ENCODE measurements at regions of chr2 and their contacts with region 1.

Region 1: DNA sequence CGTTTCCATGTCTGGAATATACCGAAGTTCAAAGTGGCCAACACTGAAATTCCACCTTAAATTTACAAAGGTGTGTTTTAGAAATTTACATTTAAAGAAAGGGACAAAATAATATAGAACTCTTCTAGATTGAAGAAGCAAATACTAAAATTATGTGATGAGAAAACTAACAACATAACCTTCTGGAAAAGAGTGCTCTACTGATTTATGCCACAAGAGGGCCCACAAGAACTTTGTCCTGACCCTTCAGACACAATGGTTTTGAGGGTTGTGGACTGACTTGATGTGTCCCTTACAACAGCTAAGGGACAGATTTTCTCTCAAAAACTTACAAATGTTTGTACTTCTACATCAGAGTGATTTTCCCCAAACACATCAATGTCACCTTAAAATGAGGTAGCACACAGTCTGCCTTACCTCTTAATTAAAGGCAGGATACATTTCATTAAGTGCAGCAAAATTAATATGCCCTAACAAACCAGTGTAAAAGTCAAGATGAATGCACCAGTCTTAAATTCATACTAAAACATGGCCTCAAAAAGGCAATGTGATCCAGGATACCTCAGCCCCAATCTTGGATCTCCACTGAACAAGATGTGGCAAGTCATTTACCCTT is 36.2 kb downstream of the EIF2AK3 start:
- DNase-seq: peak; percentile 34 to 58 (median 43)
- H3K4me3 ChIP-seq: no peak overlapping the region
- H3K4me3 Mint-ChIP-seq: no peak overlapping the region
- H3K27ac ChIP-seq: no peak overlapping the region
- H3K27ac Mint-ChIP-seq: peak overlapping the region in 4 of 7 donors; percentile 12 to 78 (median 40)
- H3K4me1 ChIP-seq: no peaks in the 10 kb centered on the region
- H3K4me1 Mint-ChIP-seq: no peaks in the 10 kb centered on the region
- H3K27me3 ChIP-seq: no peaks in the 10 kb centered on the region
- H3K27me3 Mint-ChIP-seq: no peaks in the 10 kb centered on the region

Region 2: DNA sequence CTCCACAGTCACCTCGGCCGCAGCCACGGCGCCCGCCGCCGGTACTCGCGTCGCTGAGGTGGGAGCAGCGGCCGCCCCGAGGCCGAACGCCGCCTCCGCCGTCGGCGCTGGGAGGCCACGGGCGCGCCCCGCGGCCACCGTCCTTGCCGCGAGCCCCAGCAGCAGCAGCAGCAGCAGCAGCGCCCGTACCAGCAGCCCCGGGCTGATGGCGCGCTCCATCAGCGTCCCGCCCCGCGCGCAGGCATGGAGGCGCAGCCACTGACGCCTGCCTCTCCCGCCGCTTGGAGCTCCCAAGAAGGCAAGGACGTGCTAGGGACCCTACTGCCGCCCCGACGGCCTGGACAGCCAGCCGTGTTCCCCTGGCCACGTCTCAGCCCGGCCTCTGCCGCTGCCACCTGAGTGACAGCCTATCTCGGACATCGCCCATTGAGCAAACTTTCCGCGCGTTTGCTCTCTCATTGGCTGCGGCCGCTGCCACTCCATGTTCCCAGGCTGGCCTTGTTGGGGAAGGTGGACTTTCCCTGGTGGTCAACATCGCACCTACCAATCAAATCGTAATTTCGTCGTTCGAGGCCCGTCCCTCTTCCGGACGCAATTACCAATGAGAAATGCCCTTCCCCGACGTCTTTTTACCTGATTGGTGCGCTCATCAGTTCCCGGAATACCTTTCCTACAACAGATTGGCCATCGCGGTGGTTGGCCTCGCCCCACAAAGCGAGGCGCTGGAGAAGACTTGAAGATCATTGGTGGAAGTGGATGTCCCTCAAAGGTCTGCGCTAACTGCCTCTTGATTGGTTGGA is 36.1 kb after region 1 on chr2 and contains the start of gene EIF2AK3:
- CTCF ChIA-PET with region 1: interaction called, 4 read pairs
- POLR2A ChIA-PET with region 1: interaction called, 7 read pairs
- intact Hi-C with region 1: loop called (anchors 5 kb)
- DNase-seq: peak; percentile 95 to 99 (median 99)
- H3K4me3 ChIP-seq: peak within 1 kb of the TSS; percentile 83 to 89
- H3K4me3 Mint-ChIP-seq: peak within 1 kb of the TSS; percentile 92 to 98 (median 96)
- H3K27ac ChIP-seq: peak within 1 kb of the TSS; percentile 92
- H3K27ac Mint-ChIP-seq: peak within 1 kb of the TSS in 6 of 7 donors; percentile 94 to 98 (median 96)
- H3K4me1 ChIP-seq: peaks cover 36% of the 10 kb centered on the region
- H3K4me1 Mint-ChIP-seq: peaks cover 0 to 25% (median 13%) of the 10 kb centered on the region in 4 donors
- H3K27me3 ChIP-seq: no peaks in the 10 kb centered on the region
- H3K27me3 Mint-ChIP-seq: no peaks in the 10 kb centered on the region
- total RNA-seq, gene EIF2AK3: 30.9 to 31.0 TPM

Region 3: GRCh38 chr2:89840844-89841840 is 1250.0 kb after region 1 on chr2:
- CTCF ChIA-PET with region 1: no interaction called
- POLR2A ChIA-PET with region 1: no interaction called
- intact Hi-C with region 1: no loop called
- DNase-seq: no peak
- H3K4me3 ChIP-seq: no peak overlapping the region
- H3K4me3 Mint-ChIP-seq: no peak overlapping the region
- H3K27ac ChIP-seq: no peak overlapping the region
- H3K27ac Mint-ChIP-seq: no peak overlapping the region
- H3K4me1 ChIP-seq: no peaks in the 10 kb centered on the region
- H3K4me1 Mint-ChIP-seq: peaks cover 0 to 10% (median 0%) of the 10 kb centered on the region in 4 donors
- H3K27me3 ChIP-seq: no peaks in the 10 kb centered on the region
- H3K27me3 Mint-ChIP-seq: no peaks in the 10 kb centered on the region